K562 (cell line): ENCODE measurements at regions of chr10 and their contacts with region 1.

Region 1: GRCh38 chr10:104274762-104275721 is 6.1 kb downstream of the GSTO2 start:
- DNase-seq: peak; percentile 60 to 68 (median 62)
- ATAC-seq: peak; percentile 96
- H3K4me3 ChIP-seq: no peak overlapping the region
- H3K27ac ChIP-seq: no peak overlapping the region
- H3K4me1 ChIP-seq: peaks cover 7 to 8% of the 10 kb centered on the region in 2 experiments
- H3K27me3 ChIP-seq: no peaks in the 10 kb centered on the region
- CTCF ChIP-seq: peak; percentile 66 to 81 (median 79)
- EP300 ChIP-seq: no peak
- POLR2A ChIP-seq: no peak
- RAD21 ChIP-seq: peak; percentile 26 to 48; a peak in 3 of 4 replicates

Region 2: GRCh38 chr10:104130041-104130440 is 145.0 kb before region 1 on chr10:
- CTCF ChIA-PET with region 1: no interaction called
- POLR2A ChIA-PET with region 1: no interaction called
- in situ Hi-C with region 1: no loop called
- intact Hi-C with region 1: no loop called
- DNase-seq: no peak
- ATAC-seq: no peak
- H3K4me3 ChIP-seq: no peak overlapping the region
- H3K27ac ChIP-seq: no peak overlapping the region
- H3K4me1 ChIP-seq: no peaks in the 10 kb centered on the region
- H3K27me3 ChIP-seq: no peaks in the 10 kb centered on the region
- CTCF ChIP-seq: no peak
- EP300 ChIP-seq: no peak
- POLR2A ChIP-seq: no peak
- RAD21 ChIP-seq: no peak

Region 3: GRCh38 chr10:104262055-104262454 is 13.0 kb before region 1 on chr10:
- CTCF ChIA-PET with region 1: no interaction called
- POLR2A ChIA-PET with region 1: interaction called, 12 read pairs
- in situ Hi-C with region 1: no loop called
- intact Hi-C with region 1: no loop called
- DNase-seq: no peak
- ATAC-seq: no peak
- H3K4me3 ChIP-seq: no peak overlapping the region
- H3K27ac ChIP-seq: no peak overlapping the region; the same call in 2 of the 3 replicates
- H3K4me1 ChIP-seq: peaks cover 7 to 24% of the 10 kb centered on the region in 2 experiments; a peak in 3 of 5 replicates
- H3K27me3 ChIP-seq: no peaks in the 10 kb centered on the region
- CTCF ChIP-seq: no peak
- EP300 ChIP-seq: no peak
- POLR2A ChIP-seq: no peak
- RAD21 ChIP-seq: no peak